A673 (cell line): ENCODE measurements at regions of chr5 and their contacts with region 1.

Region 1: GRCh38 chr5:150357326-150358260 is at the start of gene TCOF1:
- DNase-seq: peak; percentile 98
- H3K4me3 ChIP-seq: peak within 1 kb of the TSS; percentile 98
- H3K27ac ChIP-seq: peak within 1 kb of the TSS; percentile 87
- H3K4me1 ChIP-seq: peaks cover 8% of the 10 kb centered on the region
- H3K27me3 ChIP-seq: no peaks in the 10 kb centered on the region
- CTCF ChIP-seq: no peak
- total RNA-seq, gene TCOF1: 109 TPM in 2 replicates

Region 2: DNA sequence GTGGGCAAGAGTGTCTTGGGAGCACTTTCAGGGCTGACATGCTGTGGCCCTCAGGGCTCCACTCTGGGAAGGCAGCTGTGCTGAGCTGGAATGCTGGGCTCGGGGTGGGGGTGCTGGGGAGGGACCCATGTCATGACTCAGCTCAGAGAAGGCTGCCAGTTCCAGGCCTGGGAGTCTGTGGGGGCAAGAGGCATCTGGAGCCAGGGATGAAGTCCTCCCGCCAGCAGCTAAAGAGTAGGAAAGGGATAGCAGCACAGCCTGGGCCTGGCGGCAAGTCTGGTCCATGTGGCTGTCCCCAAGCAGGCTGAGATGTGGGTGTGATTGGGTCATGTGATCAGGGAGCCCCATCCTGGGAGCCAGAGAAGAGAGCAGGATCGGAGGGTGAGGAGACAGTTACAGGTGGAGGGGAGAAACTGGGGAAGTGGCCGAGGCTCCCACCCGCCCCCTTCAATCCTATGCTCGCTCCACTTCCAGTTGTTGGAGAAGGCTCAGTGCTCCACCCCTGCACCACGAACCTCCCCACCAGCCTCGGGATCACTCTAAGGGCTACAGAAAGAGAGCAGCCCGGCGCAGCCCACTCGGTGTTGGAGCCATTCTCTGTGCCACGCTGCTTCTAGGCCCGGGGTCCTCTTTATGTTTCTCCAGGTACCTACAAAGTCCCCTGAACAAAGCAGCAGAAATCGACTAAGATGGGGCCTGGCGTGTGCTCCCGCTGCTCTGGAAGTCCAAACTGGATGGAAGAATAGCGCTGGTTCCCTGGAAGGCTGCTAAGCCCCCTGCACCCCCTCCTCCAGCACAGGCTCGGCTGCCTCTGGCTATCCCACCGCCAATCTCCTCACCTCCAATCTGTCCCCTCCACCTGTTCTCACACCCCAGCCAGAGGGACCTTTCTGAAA is 214.0 kb before region 1 on chr5:
- CTCF ChIA-PET with region 1: no interaction called
- POLR2A ChIA-PET with region 1: no interaction called
- intact Hi-C with region 1: loop called (anchors 5 kb)
- DNase-seq: no peak
- H3K4me3 ChIP-seq: no peak overlapping the region
- H3K27ac ChIP-seq: peak overlapping the region; percentile 74
- H3K4me1 ChIP-seq: peaks cover 38% of the 10 kb centered on the region
- H3K27me3 ChIP-seq: no peaks in the 10 kb centered on the region
- CTCF ChIP-seq: no peak

Region 3: DNA sequence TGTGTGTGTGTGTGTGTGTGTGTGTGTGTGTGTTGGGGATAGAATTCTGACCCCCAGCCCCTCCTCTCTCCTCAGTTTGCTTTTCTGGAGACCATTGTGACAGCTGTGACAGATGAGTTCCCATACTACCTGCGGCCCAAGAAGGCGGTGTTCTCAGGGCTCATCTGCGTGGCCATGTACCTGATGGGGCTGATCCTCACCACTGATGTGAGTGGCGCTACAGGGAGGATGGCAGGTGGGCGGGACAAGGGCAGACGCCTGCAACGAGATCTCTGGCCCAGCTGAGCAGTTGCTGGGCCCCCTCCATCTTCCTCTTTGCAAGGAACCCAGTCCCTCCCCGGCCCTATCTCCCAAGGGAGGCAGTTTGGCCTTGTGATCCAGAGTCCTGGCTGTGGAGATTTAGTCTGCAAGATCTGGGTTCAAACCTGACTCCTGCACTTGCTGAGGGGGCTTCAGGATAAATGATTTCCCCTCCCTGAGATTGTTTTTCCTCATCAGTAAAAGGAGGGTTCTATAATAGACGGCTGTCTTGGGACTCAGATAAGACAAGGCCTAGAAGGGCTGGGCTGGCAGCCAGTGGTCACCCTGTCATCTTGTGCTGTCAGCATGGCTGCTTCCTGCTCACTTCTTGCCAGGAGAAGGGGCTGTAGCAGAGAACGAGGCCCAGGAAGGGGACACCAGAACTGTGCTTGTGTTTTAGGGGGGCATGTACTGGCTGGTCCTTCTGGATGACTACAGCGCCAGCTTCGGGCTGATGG is 153.6 kb before region 1 on chr5:
- CTCF ChIA-PET with region 1: no interaction called
- POLR2A ChIA-PET with region 1: no interaction called
- intact Hi-C with region 1: no loop called
- DNase-seq: no peak
- H3K4me3 ChIP-seq: no peak overlapping the region
- H3K27ac ChIP-seq: no peak overlapping the region
- H3K4me1 ChIP-seq: no peaks in the 10 kb centered on the region
- H3K27me3 ChIP-seq: no peaks in the 10 kb centered on the region
- CTCF ChIP-seq: no peak